CD8-positive, alpha-beta T cell (primary cell): ENCODE measurements at regions of chr5 and their contacts with region 1.

Region 1: DNA sequence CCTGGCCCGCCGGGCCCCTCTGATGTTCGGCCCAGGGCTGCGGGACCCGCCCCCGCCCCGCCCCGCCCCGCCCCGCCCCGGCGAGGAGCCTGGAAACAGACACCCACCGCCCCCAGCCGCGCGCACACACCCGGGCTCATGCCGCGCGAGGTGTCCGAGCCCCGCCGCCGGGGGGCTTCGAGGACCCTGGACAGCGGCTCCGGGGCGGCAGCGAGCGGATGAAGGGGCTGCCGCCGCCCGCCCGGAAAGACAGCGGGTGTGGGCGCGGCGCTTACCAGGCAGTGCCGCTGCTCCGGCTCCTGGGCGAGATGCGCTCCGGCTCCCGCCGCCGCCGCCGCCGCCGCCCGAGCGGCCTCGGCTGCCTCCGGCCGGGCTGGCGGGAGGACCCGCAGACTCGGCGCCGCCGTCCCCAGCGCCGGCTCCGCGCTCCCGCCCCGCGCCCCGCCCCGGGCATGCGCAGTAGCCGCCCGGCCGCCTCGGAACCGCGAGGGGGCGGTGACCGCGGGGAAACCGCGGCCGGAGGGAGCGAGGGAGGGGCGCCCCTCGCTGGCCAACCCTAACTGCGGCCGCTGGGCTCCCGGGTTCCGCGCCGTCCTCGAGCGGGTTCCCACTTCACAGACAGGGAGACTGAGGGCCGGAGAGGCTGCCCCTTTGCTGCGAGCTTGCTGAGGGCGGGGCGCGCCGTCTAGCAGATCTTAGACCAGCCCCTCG is at the start of gene GPRIN1:
- DNase-seq: peak in 7 of 9 experiments; percentile 38 to 71 (median 47)
- ATAC-seq: peak; percentile 69
- H3K4me3 ChIP-seq: peak within 1 kb of the TSS; percentile 53 to 65
- H3K4me3 Mint-ChIP-seq: peak within 1 kb of the TSS; percentile 90
- H3K27ac ChIP-seq: no peak within 1 kb of the TSS
- H3K27ac Mint-ChIP-seq: no peak within 1 kb of the TSS
- H3K4me1 ChIP-seq: peaks cover 7% of the 10 kb centered on the region
- H3K4me1 Mint-ChIP-seq: peaks cover 9% of the 10 kb centered on the region
- H3K27me3 ChIP-seq: peaks cover 0 to 5% of the 10 kb centered on the region in 2 experiments
- H3K27me3 Mint-ChIP-seq: peaks cover 27% of the 10 kb centered on the region
- CTCF ChIP-seq: no peak
- total RNA-seq, gene GPRIN1: 0.14 to 0.16 TPM

Region 2: DNA sequence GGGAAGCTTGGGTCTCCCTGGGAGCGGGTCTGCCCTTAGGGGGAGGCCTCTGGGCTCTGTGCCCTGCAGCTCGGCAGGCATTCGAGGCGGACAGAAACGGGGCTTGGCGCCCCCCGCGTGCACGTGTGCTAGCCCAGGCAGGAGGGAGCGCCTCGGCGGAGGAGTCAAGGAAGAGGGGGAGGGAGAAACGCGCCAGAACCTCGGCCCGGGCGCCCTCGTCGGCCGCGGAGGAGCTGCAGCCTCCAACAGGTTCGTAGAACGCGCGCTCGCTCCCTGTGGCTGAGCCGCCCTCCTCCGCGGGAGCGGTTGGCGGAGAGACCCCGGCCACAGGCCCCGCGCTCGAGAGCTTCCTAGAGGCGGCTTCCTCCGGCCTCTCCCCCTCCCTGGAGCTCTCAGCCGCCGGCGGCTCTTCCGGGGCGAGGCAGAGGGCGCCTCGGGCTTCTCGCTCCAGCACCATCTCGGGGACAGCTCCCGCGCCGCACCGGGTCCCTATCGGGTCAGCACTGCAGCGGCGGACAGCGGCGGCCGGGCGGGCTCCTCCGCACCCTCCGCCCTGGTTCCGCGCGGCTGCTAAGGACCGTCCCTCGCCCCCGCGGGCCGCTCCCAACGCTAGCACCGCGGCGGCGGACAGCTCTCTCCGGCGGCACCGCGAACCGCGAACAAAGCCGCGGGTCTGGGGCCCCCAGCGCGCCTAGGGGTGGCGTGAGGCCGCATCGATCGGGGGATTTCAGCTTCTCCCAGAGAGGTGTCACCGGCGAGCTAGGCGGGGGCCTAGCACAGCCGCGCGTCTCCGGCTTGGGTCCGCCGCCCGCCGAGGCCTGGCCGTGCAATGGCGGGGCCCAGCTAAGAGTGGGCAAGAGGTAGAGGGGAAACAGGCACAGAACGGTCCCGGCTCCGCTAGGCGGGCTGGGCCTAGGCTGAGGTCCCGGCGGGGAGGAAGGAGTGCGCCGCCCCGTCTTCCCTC is 813.1 kb before region 1 on chr5:
- CTCF ChIA-PET with region 1: no interaction called
- POLR2A ChIA-PET with region 1: no interaction called
- intact Hi-C with region 1: loop called in 1 of 2 experiments (anchors 5 kb)
- DNase-seq: peak; percentile 59 to 85 (median 79)
- ATAC-seq: peak; percentile 100
- H3K4me3 ChIP-seq: peak overlapping the region in 1 of 2 experiments; percentile 16
- H3K4me3 Mint-ChIP-seq: no peak overlapping the region
- H3K27ac ChIP-seq: no peak overlapping the region
- H3K27ac Mint-ChIP-seq: no peak overlapping the region
- H3K4me1 ChIP-seq: peaks cover 11% of the 10 kb centered on the region
- H3K4me1 Mint-ChIP-seq: peaks cover 9% of the 10 kb centered on the region
- H3K27me3 ChIP-seq: peaks cover 15 to 26% of the 10 kb centered on the region in 2 experiments
- H3K27me3 Mint-ChIP-seq: peaks cover 76% of the 10 kb centered on the region
- CTCF ChIP-seq: no peak

Region 3: GRCh38 chr5:176596689-176597416 is 13.0 kb before region 1 on chr5:
- CTCF ChIA-PET with region 1: interaction called, 14 read pairs
- POLR2A ChIA-PET with region 1: no interaction called
- intact Hi-C with region 1: no loop called
- DNase-seq: peak; percentile 44 to 84 (median 66)
- ATAC-seq: peak; percentile 81
- H3K4me3 ChIP-seq: peak overlapping the region; percentile 36 to 52
- H3K4me3 Mint-ChIP-seq: peak overlapping the region; percentile 77
- H3K27ac ChIP-seq: no peak overlapping the region
- H3K27ac Mint-ChIP-seq: no peak overlapping the region
- H3K4me1 ChIP-seq: peaks cover 9% of the 10 kb centered on the region
- H3K4me1 Mint-ChIP-seq: peaks cover 7% of the 10 kb centered on the region
- H3K27me3 ChIP-seq: no peaks in the 10 kb centered on the region
- H3K27me3 Mint-ChIP-seq: no peaks in the 10 kb centered on the region
- CTCF ChIP-seq: no peak

Region 4: GRCh38 chr5:177491429-177491945 is 881.6 kb after region 1 on chr5:
- CTCF ChIA-PET with region 1: no interaction called
- POLR2A ChIA-PET with region 1: no interaction called
- intact Hi-C with region 1: no loop called
- DNase-seq: peak in 2 of 9 experiments; percentile 41 to 46
- ATAC-seq: peak; percentile 27
- H3K4me3 ChIP-seq: no peak overlapping the region
- H3K4me3 Mint-ChIP-seq: no peak overlapping the region
- H3K27ac ChIP-seq: no peak overlapping the region
- H3K27ac Mint-ChIP-seq: no peak overlapping the region
- H3K4me1 ChIP-seq: peaks cover 13% of the 10 kb centered on the region
- H3K4me1 Mint-ChIP-seq: peaks cover 16% of the 10 kb centered on the region
- H3K27me3 ChIP-seq: no peaks in the 10 kb centered on the region
- H3K27me3 Mint-ChIP-seq: no peaks in the 10 kb centered on the region
- CTCF ChIP-seq: peak; percentile 27